ENCODE measurements at regions of chr6 and their contacts with region 1.

Region 1: DNA sequence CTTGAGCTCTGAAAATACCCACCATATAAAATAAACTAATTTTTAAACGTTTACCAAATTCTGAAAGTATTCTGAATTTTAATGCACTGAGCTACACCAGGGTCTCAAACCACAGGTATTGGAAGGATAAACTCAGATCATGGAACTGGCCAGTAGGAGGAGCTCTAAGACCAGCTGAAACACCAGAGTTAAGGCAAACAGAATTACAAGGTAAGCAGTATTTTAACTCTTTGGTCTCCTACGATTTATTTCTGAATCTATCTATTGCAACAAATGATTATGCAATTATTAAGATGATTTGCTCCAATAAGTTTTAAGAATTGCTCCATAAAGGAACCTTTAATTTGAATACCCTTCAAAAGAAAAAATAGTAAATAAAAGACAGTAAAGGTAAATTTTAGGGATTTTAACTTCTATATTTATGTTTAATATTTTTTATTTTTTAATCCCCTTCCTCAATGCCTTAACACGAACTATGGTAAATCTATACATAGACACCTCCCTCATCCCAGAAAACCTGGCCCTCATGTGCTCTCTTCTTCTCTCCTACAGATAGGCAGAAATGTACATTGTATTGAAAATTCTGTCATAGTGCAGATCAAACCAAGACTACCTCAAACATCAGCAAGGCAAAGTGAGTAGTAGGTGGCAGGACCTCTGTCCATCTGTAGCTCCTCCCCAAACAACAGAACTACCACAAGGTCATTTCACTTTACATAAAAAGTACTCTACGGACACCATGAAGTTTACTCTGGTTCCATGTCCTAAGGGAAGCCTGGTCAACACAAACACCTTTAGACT is 58.4 kb downstream of the SMLR1 start:
- DNase-seq: peak; percentile 19
- H3K4me3 ChIP-seq: no peak overlapping the region
- H3K27me3 ChIP-seq: no peaks in the 10 kb centered on the region
- CTCF ChIP-seq: peak; percentile 77

Region 2: DNA sequence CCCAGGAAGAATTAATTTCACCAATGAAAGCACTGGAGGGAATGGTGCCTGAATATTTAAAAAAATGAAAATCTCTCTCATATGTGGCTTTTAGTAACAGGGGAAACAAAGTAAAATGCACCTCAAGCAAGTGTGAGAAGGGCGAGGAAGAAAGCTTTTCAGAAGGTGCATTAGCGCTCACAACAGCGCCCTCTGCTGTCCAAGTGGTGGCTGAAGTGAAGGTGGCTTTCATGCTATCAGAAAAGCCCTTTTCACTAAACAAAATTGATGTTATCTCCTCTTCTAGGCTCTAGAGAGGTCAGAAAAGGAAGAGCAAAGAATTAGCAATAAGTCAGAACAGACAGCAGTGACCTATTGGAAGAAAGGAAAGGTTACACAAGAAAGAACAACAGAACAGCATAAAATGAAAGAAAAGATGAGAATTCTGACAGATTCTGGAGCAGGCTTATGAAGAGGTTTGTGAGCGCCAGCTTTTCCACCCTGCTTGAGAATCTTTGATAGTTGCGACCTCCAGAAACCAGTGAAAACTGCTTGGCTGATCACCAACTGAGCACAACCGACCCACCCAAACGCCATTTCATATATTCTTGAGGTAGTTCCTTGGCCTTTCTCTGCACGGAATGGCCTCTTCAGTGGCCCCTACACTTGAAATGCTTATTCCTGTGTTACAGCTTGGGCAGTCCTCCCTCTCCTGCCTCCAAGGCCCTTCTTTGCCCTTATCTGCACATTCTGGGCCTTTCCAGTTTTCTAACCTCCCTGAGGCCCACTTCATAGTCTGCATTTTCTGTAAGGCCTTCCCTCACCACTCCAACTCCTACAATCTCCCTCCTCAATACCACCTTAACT is 13.1 kb before region 1 on chr6:
- CTCF ChIA-PET with region 1: interaction called, 16 read pairs
- POLR2A ChIA-PET with region 1: no interaction called
- DNase-seq: no peak
- H3K4me3 ChIP-seq: no peak overlapping the region
- H3K27me3 ChIP-seq: no peaks in the 10 kb centered on the region
- CTCF ChIP-seq: peak; percentile 96

Region 3: DNA sequence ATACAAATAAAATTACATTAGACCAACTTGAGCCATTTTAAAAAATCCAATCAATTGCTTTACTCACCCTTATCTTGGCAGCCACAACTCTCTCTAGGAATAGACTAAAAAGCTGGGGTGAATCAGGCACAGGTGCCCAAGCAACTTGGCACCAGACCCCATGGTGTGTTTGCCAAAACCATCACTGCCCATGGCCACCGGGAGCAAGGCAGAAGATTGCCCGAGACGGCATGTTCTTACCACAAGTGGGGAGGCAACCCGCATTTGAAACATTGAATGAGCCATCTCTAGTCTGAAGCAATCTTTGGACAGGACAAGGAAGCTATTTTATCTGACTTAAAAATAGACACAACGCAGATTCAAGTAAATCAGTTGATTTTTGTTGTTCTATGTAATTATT is 10.7 kb after region 1 on chr6:
- CTCF ChIA-PET with region 1: no interaction called
- POLR2A ChIA-PET with region 1: no interaction called
- DNase-seq: no peak
- H3K4me3 ChIP-seq: no peak overlapping the region
- H3K27me3 ChIP-seq: no peaks in the 10 kb centered on the region
- CTCF ChIP-seq: no peak

Region 4: DNA sequence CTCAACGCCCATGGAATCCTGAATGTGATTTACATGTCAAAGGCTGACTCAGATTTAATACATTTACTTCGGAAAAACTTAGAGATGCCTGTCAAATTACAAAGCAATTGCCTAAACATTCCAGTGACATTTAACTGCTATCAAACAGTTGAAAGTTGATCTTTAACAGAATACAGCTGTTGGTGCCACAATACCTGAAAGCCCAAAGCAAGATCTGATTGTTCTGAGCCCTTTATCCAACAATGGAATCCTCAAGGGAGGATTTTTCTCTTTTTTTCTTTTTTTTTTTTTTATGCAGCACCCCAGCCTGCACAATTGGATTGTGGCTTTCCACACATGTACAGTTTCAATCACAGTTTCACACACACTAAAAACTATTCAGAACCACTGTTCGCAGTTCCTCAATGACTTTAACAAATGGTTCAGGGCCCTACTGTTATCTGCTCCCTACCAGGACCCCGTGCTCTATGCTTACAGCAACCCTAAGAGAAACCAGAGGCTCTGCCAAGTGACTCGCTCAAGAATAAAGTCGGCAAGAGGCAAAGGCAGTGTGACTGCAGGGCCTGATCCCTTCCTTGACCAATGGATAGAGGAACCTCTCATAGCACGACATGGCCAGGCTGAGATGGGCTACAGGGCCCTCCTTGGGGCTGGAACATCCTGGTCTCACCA is 144.2 kb after region 1 on chr6:
- CTCF ChIA-PET with region 1: no interaction called
- POLR2A ChIA-PET with region 1: no interaction called
- DNase-seq: no peak
- H3K4me3 ChIP-seq: no peak overlapping the region
- H3K27me3 ChIP-seq: no peaks in the 10 kb centered on the region
- CTCF ChIP-seq: no peak

Region 5: GRCh38 chr6:131107151-131107550 is 221.6 kb after region 1 on chr6:
- CTCF ChIA-PET with region 1: interaction called, 11 read pairs
- POLR2A ChIA-PET with region 1: no interaction called
- DNase-seq: peak; percentile 17
- H3K4me3 ChIP-seq: no peak overlapping the region
- H3K27me3 ChIP-seq: no peaks in the 10 kb centered on the region
- CTCF ChIP-seq: no peak

Region 6: GRCh38 chr6:131116749-131117360 is 231.3 kb after region 1 on chr6:
- CTCF ChIA-PET with region 1: interaction called, 160 read pairs
- POLR2A ChIA-PET with region 1: interaction called, 8 read pairs
- DNase-seq: no peak
- H3K4me3 ChIP-seq: no peak overlapping the region
- H3K27me3 ChIP-seq: no peaks in the 10 kb centered on the region
- CTCF ChIP-seq: peak; percentile 39

Region 7: GRCh38 chr6:131135244-131136020 is 249.8 kb after region 1 on chr6 and contains the start of gene AKAP7:
- CTCF ChIA-PET with region 1: interaction called, 10 read pairs
- POLR2A ChIA-PET with region 1: interaction called, 10 read pairs
- DNase-seq: no peak
- H3K4me3 ChIP-seq: peak within 1 kb of the TSS; percentile 70
- H3K27me3 ChIP-seq: no peaks in the 10 kb centered on the region
- CTCF ChIP-seq: no peak
- polyA plus RNA-seq, gene AKAP7: 0.63 and 1.3 TPM in 2 replicates

Region 8: GRCh38 chr6:131167773-131168172 is 282.2 kb after region 1 on chr6:
- CTCF ChIA-PET with region 1: interaction called, 15 read pairs
- POLR2A ChIA-PET with region 1: no interaction called
- DNase-seq: no peak
- H3K4me3 ChIP-seq: no peak overlapping the region
- H3K27me3 ChIP-seq: no peaks in the 10 kb centered on the region
- CTCF ChIP-seq: no peak